Left ventricle myocardium superior (tissue), 1 donor: ENCODE measurements at regions of chr18 and their contacts with region 1.

Region 1: DNA sequence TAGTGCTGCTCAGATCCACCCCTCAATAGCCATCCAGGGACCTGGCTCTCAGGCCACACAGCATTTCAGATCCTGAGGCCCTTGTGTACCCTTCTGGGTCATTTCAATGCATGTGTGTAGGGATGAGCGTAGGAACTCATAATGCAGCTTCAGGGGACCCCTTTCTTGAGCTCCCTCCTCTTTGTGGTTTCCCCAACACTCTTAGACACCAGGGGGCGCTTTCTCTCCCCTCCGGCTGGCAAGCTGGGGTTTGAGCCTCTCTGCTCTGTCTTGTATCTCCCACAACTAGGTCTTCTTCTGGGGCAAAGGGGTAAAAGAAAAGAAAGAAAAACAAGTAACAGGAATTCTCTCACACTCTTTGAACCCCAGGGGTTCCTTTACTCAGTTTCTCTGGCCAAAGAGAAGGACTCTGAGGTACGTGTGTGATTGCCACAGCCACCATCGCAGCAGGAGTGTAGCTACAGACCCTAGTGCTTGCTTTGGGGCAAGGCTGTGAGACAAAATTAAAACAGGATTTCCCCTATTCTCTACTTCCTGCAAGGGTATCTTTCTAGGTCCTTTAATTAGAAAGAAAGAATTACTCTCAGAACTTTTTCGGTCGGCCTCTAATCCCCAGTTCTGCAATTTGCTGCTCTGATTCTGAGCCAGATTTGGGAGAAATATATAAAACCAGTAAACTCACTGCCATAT is 38.0 kb downstream of the CABYR start:
- DNase-seq: peak; percentile 58
- ATAC-seq: peak; percentile 84

Region 2: GRCh38 chr18:24138789-24139616 is 37.9 kb before region 1 on chr18 and contains the start of gene CABYR:
- intact Hi-C with region 1: no loop called
- DNase-seq: peak; percentile 76
- ATAC-seq: peak; percentile 90
- total RNA-seq, gene CABYR: not detected

Region 3: DNA sequence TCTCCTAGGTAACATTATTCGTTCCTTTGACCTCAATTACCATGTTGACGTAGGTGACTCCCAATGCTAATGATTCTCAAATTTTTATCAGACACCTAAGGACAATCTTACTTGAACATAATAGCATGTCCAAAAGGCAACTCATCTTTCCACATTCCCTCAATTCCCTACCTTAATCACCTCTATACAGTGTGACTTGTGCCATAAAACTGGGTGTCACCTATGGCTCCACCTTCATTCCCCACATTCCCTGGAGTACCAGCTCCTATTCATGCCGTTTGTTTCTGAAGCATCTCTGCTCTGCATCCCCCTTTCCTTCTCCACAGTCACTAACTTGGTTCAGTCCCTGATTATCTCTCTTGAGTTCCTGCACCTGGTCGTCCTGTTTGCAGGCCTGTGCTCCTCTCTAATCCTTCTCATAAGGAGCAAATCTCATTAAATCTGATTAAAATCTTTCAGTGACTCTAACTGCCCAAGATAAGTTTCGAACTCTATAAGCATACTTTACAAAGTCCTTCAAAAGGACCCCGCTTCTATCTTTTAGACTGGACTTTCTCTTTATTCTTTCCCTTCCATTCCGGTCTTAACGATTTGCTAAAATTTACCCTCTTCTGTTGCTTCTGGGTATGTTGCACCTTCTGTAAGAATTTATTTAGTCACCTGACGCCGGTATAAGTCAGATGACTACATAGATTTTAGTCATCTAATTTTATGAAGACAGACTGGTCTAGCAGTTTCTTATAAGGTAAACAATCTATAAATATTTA is 92.1 kb after region 1 on chr18:
- intact Hi-C with region 1: loop called (anchors 5 kb)
- DNase-seq: no peak
- ATAC-seq: no peak